CD4-positive, alpha-beta T cell (primary cell): ENCODE measurements at regions of chr3 and their contacts with region 1.

Region 1: DNA sequence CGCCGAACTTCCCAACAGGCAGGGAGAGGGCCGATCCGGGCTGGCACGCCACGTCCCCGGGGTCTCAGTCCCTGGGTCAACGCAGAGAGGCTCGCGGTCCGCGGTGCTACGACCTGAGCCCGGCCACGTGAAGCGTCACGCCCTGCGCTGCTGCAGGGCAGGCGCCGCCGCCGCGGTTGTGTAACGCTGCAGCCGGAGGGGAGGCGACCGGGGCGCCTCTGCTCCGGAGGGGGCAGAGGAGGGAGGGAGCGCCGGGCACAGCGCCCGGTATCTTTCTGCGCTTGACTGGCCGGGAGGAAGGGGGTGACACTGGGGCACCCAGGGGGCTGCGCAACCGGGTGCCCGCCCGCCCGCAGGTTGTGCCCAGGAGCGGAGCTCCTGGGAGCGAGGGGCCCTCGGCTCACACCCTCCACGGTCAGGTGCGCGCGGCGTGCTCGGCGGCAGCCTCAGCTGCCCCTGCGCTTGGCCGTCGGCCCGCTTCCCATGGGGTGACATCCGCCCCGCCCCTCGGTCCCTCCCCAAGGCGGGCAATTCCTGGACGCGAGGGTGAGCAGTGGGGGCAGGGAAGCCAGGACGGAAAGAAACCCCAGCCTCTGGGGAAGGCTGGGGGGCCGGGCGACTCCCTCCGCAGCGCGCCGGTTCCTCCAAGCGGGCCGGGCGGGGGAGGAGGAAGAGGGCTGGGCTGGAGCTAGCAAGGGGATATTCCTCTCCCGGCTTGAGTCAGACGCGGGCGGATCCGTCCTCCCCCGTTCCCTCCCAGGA is 852 bp upstream of the BHLHE40 start:
- DNase-seq: peak; percentile 24 to 93 (median 62)
- ATAC-seq: peak; percentile 45
- H3K4me3 ChIP-seq: peak overlapping the region; percentile 95
- H3K4me3 Mint-ChIP-seq: peak overlapping the region; percentile 98
- H3K27ac ChIP-seq: peak overlapping the region; percentile 84 to 91
- H3K27ac Mint-ChIP-seq: peak overlapping the region; percentile 96
- H3K4me1 ChIP-seq: peaks cover 61% of the 10 kb centered on the region
- H3K4me1 Mint-ChIP-seq: peaks cover 52% of the 10 kb centered on the region
- H3K27me3 ChIP-seq: no peaks in the 10 kb centered on the region
- H3K27me3 Mint-ChIP-seq: no peaks in the 10 kb centered on the region
- CTCF ChIP-seq: no peak

Region 2: GRCh38 chr3:4712143-4712542 is 266.2 kb before region 1 on chr3:
- CTCF ChIA-PET with region 1: interaction called, 18 read pairs
- POLR2A ChIA-PET with region 1: interaction called, 5 read pairs
- intact Hi-C with region 1: loop called (anchors 1 to 5 kb)
- DNase-seq: peak in 2 of 14 experiments; percentile 34 to 42
- ATAC-seq: no peak
- H3K4me3 ChIP-seq: no peak overlapping the region
- H3K4me3 Mint-ChIP-seq: no peak overlapping the region
- H3K27ac ChIP-seq: no peak overlapping the region
- H3K27ac Mint-ChIP-seq: no peak overlapping the region
- H3K4me1 ChIP-seq: no peaks in the 10 kb centered on the region
- H3K4me1 Mint-ChIP-seq: no peaks in the 10 kb centered on the region
- H3K27me3 ChIP-seq: no peaks in the 10 kb centered on the region
- H3K27me3 Mint-ChIP-seq: no peaks in the 10 kb centered on the region
- CTCF ChIP-seq: no peak

Region 3: GRCh38 chr3:4834403-4834866 is 143.9 kb before region 1 on chr3:
- CTCF ChIA-PET with region 1: interaction called, 29 read pairs
- POLR2A ChIA-PET with region 1: interaction called, 12 read pairs
- intact Hi-C with region 1: no loop called
- DNase-seq: peak; percentile 49 to 91 (median 60)
- ATAC-seq: peak; percentile 35
- H3K4me3 ChIP-seq: no peak overlapping the region
- H3K4me3 Mint-ChIP-seq: peak overlapping the region; percentile 55
- H3K27ac ChIP-seq: peak overlapping the region; percentile 19 to 24
- H3K27ac Mint-ChIP-seq: peak overlapping the region; percentile 92
- H3K4me1 ChIP-seq: peaks cover 75% of the 10 kb centered on the region
- H3K4me1 Mint-ChIP-seq: peaks cover 76% of the 10 kb centered on the region
- H3K27me3 ChIP-seq: no peaks in the 10 kb centered on the region
- H3K27me3 Mint-ChIP-seq: no peaks in the 10 kb centered on the region
- CTCF ChIP-seq: no peak

Region 4: DNA sequence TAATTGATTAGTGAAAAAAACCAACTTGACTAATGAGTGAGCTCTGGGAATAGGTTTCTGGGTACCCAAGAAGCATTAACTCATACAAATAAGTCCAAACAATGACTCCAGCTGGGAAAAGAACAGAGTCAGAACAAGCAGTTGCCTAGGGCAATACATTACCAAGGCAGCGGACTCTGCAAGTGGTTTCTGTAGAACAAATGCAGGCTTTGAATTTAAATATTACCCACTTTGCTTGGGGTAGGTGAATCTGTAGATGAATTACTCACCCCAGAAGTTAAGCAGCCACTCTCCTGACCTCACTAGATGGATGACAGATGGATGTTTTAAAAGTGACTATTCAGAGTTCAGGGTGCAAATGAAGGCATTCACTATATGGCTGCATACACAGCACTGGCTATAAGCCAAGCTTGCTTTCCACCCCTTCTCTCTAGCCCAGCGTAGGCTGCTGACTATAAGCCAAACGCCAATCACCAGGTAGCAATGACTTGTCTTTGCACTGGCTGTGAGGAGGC is 72.2 kb before region 1 on chr3:
- CTCF ChIA-PET with region 1: interaction called, 4 read pairs
- POLR2A ChIA-PET with region 1: interaction called, 5 read pairs
- intact Hi-C with region 1: loop called in 1 of 2 experiments (anchors 5 kb)
- DNase-seq: peak in 1 of 14 experiments; percentile 16
- ATAC-seq: no peak
- H3K4me3 ChIP-seq: no peak overlapping the region
- H3K4me3 Mint-ChIP-seq: no peak overlapping the region
- H3K27ac ChIP-seq: no peak overlapping the region
- H3K27ac Mint-ChIP-seq: no peak overlapping the region
- H3K4me1 ChIP-seq: peaks cover 40% of the 10 kb centered on the region
- H3K4me1 Mint-ChIP-seq: peaks cover 57% of the 10 kb centered on the region
- H3K27me3 ChIP-seq: no peaks in the 10 kb centered on the region
- H3K27me3 Mint-ChIP-seq: no peaks in the 10 kb centered on the region
- CTCF ChIP-seq: no peak

Region 5: DNA sequence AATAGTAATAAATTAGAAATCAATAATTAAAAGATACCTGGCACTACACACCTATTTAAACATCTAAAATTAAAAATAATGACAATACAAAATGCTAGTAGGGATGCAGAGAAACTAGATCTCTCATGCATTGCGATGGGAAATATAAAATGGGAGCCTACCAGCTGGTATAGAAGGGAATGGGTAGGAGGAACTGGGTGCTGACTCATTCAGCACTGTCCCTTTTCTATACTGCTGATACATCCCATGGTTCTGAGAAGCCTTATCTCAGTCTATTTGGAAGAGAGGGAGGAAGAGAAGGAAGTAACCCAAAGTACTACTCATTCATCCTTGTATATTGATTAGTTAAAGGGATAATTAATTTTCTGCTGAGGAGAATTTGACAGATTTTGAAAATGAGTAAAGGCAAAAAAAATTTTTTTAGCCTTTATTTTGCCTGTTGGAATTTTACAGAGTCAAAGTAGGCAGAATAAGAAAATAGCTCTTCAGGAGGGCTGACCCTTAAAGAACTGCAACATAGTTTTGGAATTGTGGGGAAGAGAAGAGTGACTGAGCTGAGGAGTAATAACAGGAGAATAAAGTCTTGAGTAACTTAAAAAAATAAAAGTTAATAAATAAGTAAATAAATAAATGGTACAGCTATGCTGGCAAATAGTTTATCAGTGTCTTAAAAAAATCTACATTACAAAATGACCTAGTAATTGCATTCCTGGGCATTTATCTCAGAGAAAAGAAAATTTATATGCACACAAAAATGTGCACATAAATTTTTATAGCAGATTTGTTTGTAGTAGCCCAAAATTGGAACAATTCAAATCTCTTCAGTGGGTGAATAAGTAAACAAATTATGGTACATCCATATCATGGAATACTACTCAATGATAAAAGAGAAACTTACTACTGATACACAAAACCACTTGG is 14.5 kb before region 1 on chr3:
- CTCF ChIA-PET with region 1: interaction called, 5 read pairs
- POLR2A ChIA-PET with region 1: interaction called, 13 read pairs
- intact Hi-C with region 1: no loop called
- DNase-seq: no peak
- ATAC-seq: no peak
- H3K4me3 ChIP-seq: no peak overlapping the region
- H3K4me3 Mint-ChIP-seq: no peak overlapping the region
- H3K27ac ChIP-seq: no peak overlapping the region
- H3K27ac Mint-ChIP-seq: no peak overlapping the region
- H3K4me1 ChIP-seq: peaks cover 14% of the 10 kb centered on the region
- H3K4me1 Mint-ChIP-seq: peaks cover 22% of the 10 kb centered on the region
- H3K27me3 ChIP-seq: no peaks in the 10 kb centered on the region
- H3K27me3 Mint-ChIP-seq: no peaks in the 10 kb centered on the region
- CTCF ChIP-seq: no peak

Region 6: DNA sequence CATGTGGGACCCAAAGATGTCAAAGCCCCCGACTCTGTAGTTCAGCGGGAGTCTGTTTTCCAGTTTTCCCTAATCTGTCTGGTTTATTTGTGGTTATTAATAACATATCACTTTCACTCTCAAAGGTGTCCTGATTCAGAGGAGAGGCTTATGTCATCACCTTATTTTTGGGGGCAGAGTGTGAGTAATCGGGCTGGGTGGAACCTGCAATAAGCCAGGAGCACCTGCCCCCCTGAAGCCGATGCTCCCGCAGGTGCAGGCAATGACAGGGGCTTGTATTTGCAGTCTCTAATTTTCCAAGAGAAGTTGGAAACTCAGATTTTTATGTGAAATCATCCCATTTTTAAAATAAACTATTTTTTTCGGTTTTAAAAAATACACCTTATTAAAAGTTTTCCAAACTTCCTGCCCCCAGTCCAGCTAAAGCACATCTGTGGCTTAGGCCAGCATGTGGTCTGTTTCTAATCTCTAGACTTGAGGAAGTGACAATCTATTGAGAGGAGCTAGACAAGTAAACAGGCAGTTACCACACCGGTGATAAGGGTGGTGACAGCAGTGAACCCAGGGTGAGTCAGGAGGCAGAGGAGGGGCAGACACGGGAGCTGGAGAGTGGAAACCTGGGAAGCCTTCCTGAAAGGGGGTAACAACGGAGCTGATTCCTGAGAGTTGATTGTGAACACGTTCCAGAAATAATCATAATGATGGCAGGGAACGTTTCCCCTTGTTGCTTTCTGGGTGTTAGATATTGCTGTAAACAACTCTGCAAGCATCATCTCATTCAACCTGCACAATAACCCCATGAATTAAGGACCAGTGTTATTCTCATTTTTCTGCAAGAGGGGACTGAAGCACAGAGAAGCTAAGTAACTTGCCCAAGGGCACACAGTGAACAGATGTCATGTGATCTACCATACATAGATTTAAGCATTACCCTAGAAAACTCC is 38.1 kb after region 1 on chr3:
- CTCF ChIA-PET with region 1: interaction called, 23 read pairs
- POLR2A ChIA-PET with region 1: interaction called, 16 read pairs
- intact Hi-C with region 1: no loop called
- DNase-seq: peak in 12 of 14 experiments; percentile 13 to 80 (median 34)
- ATAC-seq: peak; percentile 44
- H3K4me3 ChIP-seq: no peak overlapping the region
- H3K4me3 Mint-ChIP-seq: peak overlapping the region; percentile 43
- H3K27ac ChIP-seq: no peak overlapping the region
- H3K27ac Mint-ChIP-seq: peak overlapping the region; percentile 86
- H3K4me1 ChIP-seq: peaks cover 68% of the 10 kb centered on the region
- H3K4me1 Mint-ChIP-seq: peaks cover 46% of the 10 kb centered on the region
- H3K27me3 ChIP-seq: no peaks in the 10 kb centered on the region
- H3K27me3 Mint-ChIP-seq: no peaks in the 10 kb centered on the region
- CTCF ChIP-seq: no peak

Region 7: DNA sequence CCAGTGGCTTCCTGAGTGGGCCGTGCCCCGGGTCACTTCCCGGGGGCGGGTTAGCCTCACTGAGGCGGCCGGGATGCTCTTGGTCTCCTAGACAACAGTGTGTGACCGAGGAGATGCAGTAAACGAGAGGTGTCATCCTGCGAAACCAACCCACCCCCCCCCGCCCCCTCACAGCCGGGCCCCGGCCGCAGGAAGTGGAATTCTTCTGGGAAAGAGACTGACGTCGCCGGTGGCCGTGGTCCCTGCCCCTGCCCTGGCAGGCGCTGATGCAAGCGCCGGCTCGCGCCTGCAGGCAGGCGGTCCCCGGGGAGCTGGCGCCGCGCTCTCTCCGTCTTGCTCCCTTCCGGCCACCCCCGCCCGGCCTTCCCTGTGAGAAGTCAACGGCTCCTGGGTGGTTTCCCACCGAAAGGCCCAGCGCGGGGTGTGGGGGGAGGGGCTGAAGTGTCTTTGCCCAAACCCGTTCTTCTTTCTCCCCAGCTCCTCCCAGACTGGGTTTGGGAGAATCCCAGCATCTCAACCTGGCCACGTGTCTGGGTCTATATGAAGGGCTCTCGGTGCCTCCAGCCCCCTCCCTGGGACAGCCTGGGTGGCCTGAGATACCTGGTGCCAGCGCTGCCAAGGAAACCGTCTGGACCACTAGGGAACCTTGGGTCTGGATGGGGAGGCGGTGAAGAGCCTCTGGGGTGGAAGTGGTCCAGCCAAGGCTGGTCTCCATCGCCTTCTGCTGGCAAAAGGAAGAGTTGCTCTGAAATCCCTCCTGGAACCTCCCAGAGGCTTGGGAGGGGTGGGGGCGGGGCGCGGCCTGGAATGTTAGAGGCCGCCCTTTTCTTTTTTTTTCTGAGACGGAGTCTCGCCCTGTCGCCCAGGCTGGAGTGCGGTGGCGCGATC is 48.2 kb after region 1 on chr3:
- CTCF ChIA-PET with region 1: interaction called, 20 read pairs
- POLR2A ChIA-PET with region 1: interaction called, 5 read pairs
- intact Hi-C with region 1: no loop called
- DNase-seq: peak; percentile 33 to 87 (median 48)
- ATAC-seq: peak; percentile 75
- H3K4me3 ChIP-seq: peak overlapping the region; percentile 61
- H3K4me3 Mint-ChIP-seq: peak overlapping the region; percentile 86
- H3K27ac ChIP-seq: peak overlapping the region in 1 of 2 donors; percentile 44
- H3K27ac Mint-ChIP-seq: peak overlapping the region; percentile 75
- H3K4me1 ChIP-seq: peaks cover 16% of the 10 kb centered on the region
- H3K4me1 Mint-ChIP-seq: peaks cover 11% of the 10 kb centered on the region
- H3K27me3 ChIP-seq: no peaks in the 10 kb centered on the region
- H3K27me3 Mint-ChIP-seq: no peaks in the 10 kb centered on the region
- CTCF ChIP-seq: peak; percentile 68

Region 8: DNA sequence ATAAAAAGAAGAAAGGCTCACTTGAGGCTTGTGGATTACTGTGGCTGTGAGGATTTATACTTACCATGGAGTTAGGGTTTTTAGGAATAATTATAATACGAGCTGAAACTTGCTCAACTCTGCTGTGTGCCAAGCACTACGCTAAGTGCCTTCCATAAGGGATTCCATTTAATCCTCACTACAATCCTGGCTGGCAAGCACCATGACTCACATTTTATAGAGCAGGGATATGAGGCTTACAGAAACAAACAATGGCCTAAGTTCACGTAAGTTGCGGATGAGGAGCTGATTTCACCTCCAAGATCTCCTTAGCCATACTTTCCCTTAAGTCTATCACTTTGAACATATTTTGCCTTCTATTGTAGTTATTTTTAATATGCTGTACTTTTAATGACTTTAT is 99.8 kb after region 1 on chr3:
- CTCF ChIA-PET with region 1: no interaction called
- POLR2A ChIA-PET with region 1: no interaction called
- intact Hi-C with region 1: no loop called
- DNase-seq: no peak
- ATAC-seq: no peak
- H3K4me3 ChIP-seq: no peak overlapping the region
- H3K4me3 Mint-ChIP-seq: no peak overlapping the region
- H3K27ac ChIP-seq: no peak overlapping the region
- H3K27ac Mint-ChIP-seq: no peak overlapping the region
- H3K4me1 ChIP-seq: no peaks in the 10 kb centered on the region
- H3K4me1 Mint-ChIP-seq: no peaks in the 10 kb centered on the region
- H3K27me3 ChIP-seq: no peaks in the 10 kb centered on the region
- H3K27me3 Mint-ChIP-seq: no peaks in the 10 kb centered on the region
- CTCF ChIP-seq: no peak

Region 9: DNA sequence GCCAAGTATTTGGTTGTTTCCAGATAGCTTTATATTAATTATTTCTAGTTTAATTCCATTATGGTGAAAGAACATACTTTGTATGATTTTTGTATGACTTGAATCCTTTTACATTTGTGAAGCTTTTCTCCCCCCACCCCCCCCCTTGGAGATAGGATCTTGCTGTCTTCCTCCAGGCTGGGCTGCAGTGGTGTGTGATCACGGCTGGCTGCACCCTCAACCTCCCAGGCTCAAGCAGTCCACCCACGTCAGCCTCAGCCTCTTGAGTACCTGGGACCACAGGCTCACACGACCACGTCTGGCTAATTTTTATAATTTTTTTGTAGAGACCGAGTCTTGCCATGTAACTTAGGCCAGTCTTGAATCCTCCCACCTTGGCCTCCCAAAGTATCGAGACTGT is 173.2 kb after region 1 on chr3:
- CTCF ChIA-PET with region 1: no interaction called
- POLR2A ChIA-PET with region 1: no interaction called
- intact Hi-C with region 1: no loop called
- DNase-seq: no peak
- ATAC-seq: no peak
- H3K4me3 ChIP-seq: no peak overlapping the region
- H3K4me3 Mint-ChIP-seq: no peak overlapping the region
- H3K27ac ChIP-seq: no peak overlapping the region
- H3K27ac Mint-ChIP-seq: no peak overlapping the region
- H3K4me1 ChIP-seq: peaks cover 10% of the 10 kb centered on the region
- H3K4me1 Mint-ChIP-seq: peaks cover 81% of the 10 kb centered on the region
- H3K27me3 ChIP-seq: no peaks in the 10 kb centered on the region
- H3K27me3 Mint-ChIP-seq: no peaks in the 10 kb centered on the region
- CTCF ChIP-seq: no peak